Mammary epithelial cell (primary cell): ENCODE measurements at regions of chr18 and their contacts with region 1.

Region 1: DNA sequence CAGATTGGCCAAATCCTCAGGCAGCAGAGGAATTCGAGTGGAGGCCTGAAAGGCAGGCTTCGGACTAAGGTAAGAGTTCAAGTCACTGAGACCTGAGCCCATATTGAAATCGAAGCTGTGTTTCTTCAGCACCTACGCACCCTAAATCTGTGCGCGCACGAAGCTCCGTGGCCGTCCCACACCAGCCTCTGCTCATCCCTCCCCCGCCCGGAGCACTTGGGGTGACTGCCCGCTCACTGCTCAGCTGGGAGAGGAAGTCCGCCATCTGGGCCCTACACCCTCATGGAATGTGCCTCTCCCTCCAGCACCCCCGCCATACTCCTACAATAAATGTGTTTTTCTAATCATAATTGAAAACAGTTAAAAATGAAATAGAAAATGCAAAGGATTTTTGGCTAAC is 734.5 kb downstream of the GALR1 start:
- DNase-seq: no peak
- H3K4me3 ChIP-seq: no peak overlapping the region
- H3K27ac ChIP-seq: no peak overlapping the region
- H3K4me1 ChIP-seq: no peaks in the 10 kb centered on the region
- H3K27me3 ChIP-seq: no peaks in the 10 kb centered on the region
- CTCF ChIP-seq: no peak

Region 2: DNA sequence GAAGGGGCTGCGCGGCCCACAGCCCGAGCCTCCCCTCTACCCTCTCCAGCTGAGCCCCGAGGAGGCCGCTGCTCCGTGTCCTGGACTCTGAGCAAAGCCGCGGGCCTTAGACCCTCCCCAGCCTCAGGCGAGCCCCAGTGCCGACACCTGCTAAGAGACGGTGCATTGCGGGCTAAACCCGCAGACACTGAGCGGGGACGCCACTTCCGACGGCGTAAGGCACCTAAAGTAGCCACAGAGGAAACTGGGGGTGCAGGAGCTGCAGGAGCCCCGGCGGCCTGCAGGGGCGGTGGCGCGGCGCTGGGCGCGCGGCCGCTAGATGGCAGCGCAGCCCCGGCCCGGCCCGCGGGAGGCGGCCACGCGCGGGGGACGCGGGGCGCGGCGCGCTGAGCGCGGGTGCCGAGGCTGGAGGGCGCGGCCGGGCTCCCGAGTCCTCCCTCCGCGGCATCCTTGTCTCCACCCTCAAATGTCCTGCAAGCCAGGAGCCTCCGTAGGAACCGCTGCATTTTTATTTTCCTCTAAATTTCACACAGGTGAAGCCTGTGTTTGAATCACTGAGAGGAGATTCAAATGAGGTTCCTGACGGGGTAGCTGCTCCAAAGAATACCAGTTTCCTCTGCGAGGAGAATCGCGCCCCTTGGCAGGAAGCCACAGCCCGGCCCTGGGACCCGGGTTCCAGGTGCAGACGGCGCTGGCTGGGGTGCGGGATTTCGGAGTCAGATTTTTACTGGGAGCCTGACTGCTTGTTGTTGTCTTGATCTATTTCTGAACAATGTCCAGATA is 84.0 kb before region 1 on chr18:
- CTCF ChIA-PET with region 1: no interaction called
- dilution Hi-C with region 1: loop called (anchors 5 kb)
- in situ Hi-C with region 1: no loop called
- intact Hi-C with region 1: no loop called
- DNase-seq: peak; percentile 14
- H3K4me3 ChIP-seq: no peak overlapping the region
- H3K27ac ChIP-seq: no peak overlapping the region
- H3K4me1 ChIP-seq: no peaks in the 10 kb centered on the region
- H3K27me3 ChIP-seq: no peaks in the 10 kb centered on the region
- CTCF ChIP-seq: peak; percentile 64 to 70

Region 3: GRCh38 chr18:78021196-78021595 is 37.0 kb after region 1 on chr18:
- CTCF ChIA-PET with region 1: no interaction called
- dilution Hi-C with region 1: loop called (anchors 5 kb)
- in situ Hi-C with region 1: no loop called
- intact Hi-C with region 1: no loop called
- DNase-seq: no peak
- H3K4me3 ChIP-seq: no peak overlapping the region
- H3K27ac ChIP-seq: no peak overlapping the region
- H3K4me1 ChIP-seq: no peaks in the 10 kb centered on the region
- H3K27me3 ChIP-seq: no peaks in the 10 kb centered on the region
- CTCF ChIP-seq: no peak

Region 4: GRCh38 chr18:78073275-78073674 is 89.1 kb after region 1 on chr18:
- CTCF ChIA-PET with region 1: no interaction called
- dilution Hi-C with region 1: loop called (anchors 5 kb)
- in situ Hi-C with region 1: no loop called
- intact Hi-C with region 1: no loop called
- DNase-seq: no peak
- H3K4me3 ChIP-seq: no peak overlapping the region
- H3K27ac ChIP-seq: no peak overlapping the region
- H3K4me1 ChIP-seq: no peaks in the 10 kb centered on the region
- H3K27me3 ChIP-seq: no peaks in the 10 kb centered on the region
- CTCF ChIP-seq: no peak